Activated naive CD8-positive, alpha-beta T cell treated with anti-CD3 and anti-CD28 coated beads, Interleukin-2, amount 10 ng/mL, durations not matched to agents 7 days and 5 days (primary cell): ENCODE measurements at regions of chr9 and their contacts with region 1.

Region 1: GRCh38 chr9:75027187-75028107 is 646 bp downstream of the CARNMT1 start:
- DNase-seq: no peak
- ATAC-seq: peak; percentile 23
- H3K4me3 Mint-ChIP-seq: peak overlapping the region; percentile 93
- H3K27ac Mint-ChIP-seq: peak overlapping the region; percentile 97
- H3K4me1 Mint-ChIP-seq: peaks cover 30% of the 10 kb centered on the region
- H3K27me3 Mint-ChIP-seq: no peaks in the 10 kb centered on the region

Region 2: DNA sequence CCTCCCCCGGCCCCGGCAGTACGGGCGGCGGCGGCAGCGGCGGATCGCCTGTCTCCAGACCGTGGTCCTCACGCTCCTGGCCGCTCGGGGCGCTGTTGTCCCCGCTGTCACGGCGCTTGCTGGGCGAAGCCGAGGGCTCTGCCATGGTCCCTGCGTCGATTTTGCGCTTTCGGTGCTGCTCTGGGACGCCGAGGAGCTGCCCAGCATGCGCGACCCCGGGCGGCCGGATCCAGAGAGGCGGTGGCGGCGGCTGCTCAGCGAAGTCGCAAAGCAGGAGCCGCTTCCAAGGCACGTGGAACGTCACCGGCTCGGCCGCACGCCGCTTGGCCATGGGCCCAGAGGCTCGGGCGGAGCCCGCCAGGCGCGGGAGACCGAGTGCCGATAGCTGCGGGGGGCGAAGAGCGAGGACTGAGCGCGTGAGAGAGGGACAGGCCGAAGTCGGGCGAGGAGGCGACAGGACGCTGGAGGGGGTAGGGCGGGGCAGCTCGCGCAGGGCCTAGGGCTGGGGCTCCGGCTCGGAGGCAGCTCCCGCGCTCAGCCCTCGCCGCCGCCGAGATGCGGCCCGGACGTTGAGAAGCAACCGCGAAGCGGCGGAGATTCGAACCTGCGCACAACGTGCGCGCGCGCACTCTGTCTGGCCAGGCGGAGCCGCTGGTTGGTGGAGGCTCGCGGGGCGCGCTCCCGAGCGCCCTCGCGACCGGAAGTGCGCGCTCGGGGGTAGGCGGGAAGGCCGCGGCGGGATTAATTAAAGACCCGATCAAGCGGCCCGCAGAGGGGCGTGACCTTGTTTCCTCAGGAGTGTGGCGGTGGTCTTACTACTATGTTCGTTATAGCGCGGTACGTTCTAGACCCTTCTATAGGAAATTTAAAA is 74.9 kb before region 1 on chr9 and contains the start of gene C9orf40:
- POLR2A ChIA-PET with region 1: interaction called, 26 read pairs
- DNase-seq: peak; percentile 95
- ATAC-seq: peak; percentile 90
- H3K4me3 Mint-ChIP-seq: peak within 1 kb of the TSS; percentile 96
- H3K27ac Mint-ChIP-seq: peak within 1 kb of the TSS; percentile 94
- H3K4me1 Mint-ChIP-seq: peaks cover 23% of the 10 kb centered on the region
- H3K27me3 Mint-ChIP-seq: no peaks in the 10 kb centered on the region
- total RNA-seq, gene C9orf40: 17.9 to 18.0 TPM